OCI-LY7 (cell line): ENCODE measurements at regions of chr6 and their contacts with region 1.

Region 1: GRCh38 chr6:125995972-125996580 is 9.7 kb downstream of the TRMT11 start:
- DNase-seq: peak; percentile 81
- H3K4me3 ChIP-seq: peak overlapping the region; percentile 42
- H3K27ac ChIP-seq: no peak overlapping the region
- H3K4me1 ChIP-seq: peaks cover 6% of the 10 kb centered on the region
- CTCF ChIP-seq: peak; percentile 100

Region 2: DNA sequence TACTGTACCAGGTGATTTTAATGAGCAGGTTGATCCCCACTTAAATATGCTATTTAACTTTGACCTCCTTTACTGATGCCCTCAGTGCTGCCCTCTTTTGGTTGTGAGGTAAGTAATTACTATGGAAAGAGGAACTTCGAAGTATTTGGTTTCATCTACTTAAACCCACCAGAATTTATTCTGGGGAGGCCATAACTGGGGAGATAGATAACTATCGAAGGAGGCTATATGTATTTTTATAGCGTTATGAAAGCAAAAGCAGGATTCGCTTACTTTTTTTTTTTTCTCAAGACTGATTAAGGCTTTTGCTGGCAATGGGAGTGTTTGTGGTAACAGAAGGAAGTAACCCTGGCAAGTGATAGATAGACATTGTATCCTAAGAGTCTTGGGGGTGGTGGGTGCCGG is 174.9 kb after region 1 on chr6:
- CTCF ChIA-PET with region 1: no interaction called
- POLR2A ChIA-PET with region 1: no interaction called
- intact Hi-C with region 1: loop called (anchors 1 kb)
- DNase-seq: peak; percentile 61
- H3K4me3 ChIP-seq: no peak overlapping the region
- H3K27ac ChIP-seq: no peak overlapping the region
- H3K4me1 ChIP-seq: no peaks in the 10 kb centered on the region
- CTCF ChIP-seq: peak; percentile 88

Region 3: GRCh38 chr6:127120787-127121636 is 1124.9 kb after region 1 on chr6:
- CTCF ChIA-PET with region 1: no interaction called
- POLR2A ChIA-PET with region 1: no interaction called
- intact Hi-C with region 1: loop called (anchors 5 kb)
- DNase-seq: peak; percentile 43
- H3K4me3 ChIP-seq: no peak overlapping the region
- H3K27ac ChIP-seq: no peak overlapping the region
- H3K4me1 ChIP-seq: no peaks in the 10 kb centered on the region
- CTCF ChIP-seq: peak; percentile 77